CD4-positive, alpha-beta T cell (primary cell): ENCODE measurements at regions of chr1 and their contacts with region 1.

Region 1: GRCh38 chr1:15847100-15847892 is at the start of gene SPEN:
- DNase-seq: peak; percentile 91 to 99 (median 98)
- ATAC-seq: peak; percentile 83
- H3K4me3 ChIP-seq: peak within 1 kb of the TSS; percentile 98
- H3K4me3 Mint-ChIP-seq: peak within 1 kb of the TSS; percentile 97
- H3K27ac ChIP-seq: peak within 1 kb of the TSS; percentile 90 to 92
- H3K27ac Mint-ChIP-seq: peak within 1 kb of the TSS; percentile 96
- H3K4me1 ChIP-seq: peaks cover 42% of the 10 kb centered on the region
- H3K4me1 Mint-ChIP-seq: peaks cover 55% of the 10 kb centered on the region
- H3K27me3 ChIP-seq: no peaks in the 10 kb centered on the region
- H3K27me3 Mint-ChIP-seq: no peaks in the 10 kb centered on the region
- CTCF ChIP-seq: no peak
- total RNA-seq, gene SPEN: 73.5 to 76.7 TPM

Region 2: DNA sequence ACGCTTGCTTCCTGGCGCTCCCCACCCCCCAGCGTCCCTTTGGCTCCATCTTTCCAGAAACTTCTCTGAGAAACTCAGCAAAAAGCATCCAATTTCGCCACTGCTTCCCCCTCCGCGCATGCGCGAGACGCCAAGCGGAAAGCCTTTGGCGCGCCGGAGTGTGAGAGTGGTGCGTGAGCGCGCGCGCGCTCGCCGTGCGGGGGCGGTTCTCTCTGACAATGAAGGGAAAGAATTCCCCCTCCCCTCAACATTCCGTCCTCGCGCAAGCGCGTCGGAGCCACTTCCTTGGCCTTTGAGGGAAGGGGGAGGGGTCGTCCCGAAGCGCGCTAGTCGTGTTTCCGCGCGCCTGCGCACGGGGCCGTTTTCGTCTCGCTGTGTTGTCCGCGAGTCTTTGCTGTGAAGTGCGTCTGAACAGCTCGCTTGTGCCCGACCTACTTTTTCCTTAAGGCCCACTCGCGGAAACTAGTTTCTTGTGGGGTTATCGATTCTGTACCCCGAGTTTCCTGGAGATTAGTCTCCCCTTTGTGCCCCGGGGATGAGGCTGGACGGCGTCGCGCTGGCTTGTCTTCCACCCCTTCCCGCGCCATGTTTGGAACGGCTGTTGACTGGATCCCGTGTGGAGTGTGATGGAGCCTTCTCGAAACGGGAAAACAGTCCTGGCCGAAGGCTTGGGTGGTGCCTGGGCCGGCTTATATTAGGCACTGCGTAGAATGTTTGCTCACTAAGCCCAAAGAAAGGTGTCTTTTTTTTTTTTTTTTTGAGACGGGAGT is 11.4 kb before region 1 on chr1:
- CTCF ChIA-PET with region 1: interaction called, 26 read pairs
- POLR2A ChIA-PET with region 1: interaction called, 518 read pairs
- intact Hi-C with region 1: loop called (anchors 1 kb)
- DNase-seq: peak; percentile 97 to 100 (median 99)
- ATAC-seq: peak; percentile 54
- H3K4me3 ChIP-seq: peak overlapping the region; percentile 70
- H3K4me3 Mint-ChIP-seq: peak overlapping the region; percentile 98
- H3K27ac ChIP-seq: peak overlapping the region; percentile 96 to 99
- H3K27ac Mint-ChIP-seq: peak overlapping the region; percentile 99
- H3K4me1 ChIP-seq: peaks cover 35% of the 10 kb centered on the region
- H3K4me1 Mint-ChIP-seq: peaks cover 26% of the 10 kb centered on the region
- H3K27me3 ChIP-seq: no peaks in the 10 kb centered on the region
- H3K27me3 Mint-ChIP-seq: no peaks in the 10 kb centered on the region
- CTCF ChIP-seq: no peak

Region 3: GRCh38 chr1:15885701-15886610 is 38.7 kb after region 1 on chr1:
- CTCF ChIA-PET with region 1: no interaction called
- POLR2A ChIA-PET with region 1: interaction called, 15 read pairs
- intact Hi-C with region 1: loop called in 1 of 2 experiments (anchors 5 kb)
- DNase-seq: peak in 11 of 14 experiments; percentile 2 to 70 (median 33)
- ATAC-seq: peak; percentile 60
- H3K4me3 ChIP-seq: peak overlapping the region; percentile 26
- H3K4me3 Mint-ChIP-seq: peak overlapping the region; percentile 52
- H3K27ac ChIP-seq: no peak overlapping the region
- H3K27ac Mint-ChIP-seq: peak overlapping the region; percentile 68
- H3K4me1 ChIP-seq: peaks cover 33% of the 10 kb centered on the region
- H3K4me1 Mint-ChIP-seq: peaks cover 69% of the 10 kb centered on the region
- H3K27me3 ChIP-seq: no peaks in the 10 kb centered on the region
- H3K27me3 Mint-ChIP-seq: no peaks in the 10 kb centered on the region
- CTCF ChIP-seq: no peak

Region 4: GRCh38 chr1:15918962-15919715 is 71.8 kb after region 1 on chr1:
- CTCF ChIA-PET with region 1: interaction called, 3 read pairs
- POLR2A ChIA-PET with region 1: interaction called, 6 read pairs
- intact Hi-C with region 1: loop called in 1 of 2 experiments (anchors 5 kb)
- DNase-seq: peak in 9 of 14 experiments; percentile 14 to 71 (median 27)
- ATAC-seq: peak; percentile 84
- H3K4me3 ChIP-seq: no peak overlapping the region
- H3K4me3 Mint-ChIP-seq: no peak overlapping the region
- H3K27ac ChIP-seq: no peak overlapping the region
- H3K27ac Mint-ChIP-seq: peak overlapping the region; percentile 18
- H3K4me1 ChIP-seq: peaks cover 17% of the 10 kb centered on the region
- H3K4me1 Mint-ChIP-seq: peaks cover 30% of the 10 kb centered on the region
- H3K27me3 ChIP-seq: no peaks in the 10 kb centered on the region
- H3K27me3 Mint-ChIP-seq: no peaks in the 10 kb centered on the region
- CTCF ChIP-seq: no peak

Region 5: GRCh38 chr1:15985611-15986297 is 138.5 kb after region 1 on chr1:
- CTCF ChIA-PET with region 1: no interaction called
- POLR2A ChIA-PET with region 1: no interaction called
- intact Hi-C with region 1: no loop called
- DNase-seq: peak in 1 of 14 experiments; percentile 26
- ATAC-seq: no peak
- H3K4me3 ChIP-seq: no peak overlapping the region
- H3K4me3 Mint-ChIP-seq: no peak overlapping the region
- H3K27ac ChIP-seq: no peak overlapping the region
- H3K27ac Mint-ChIP-seq: no peak overlapping the region
- H3K4me1 ChIP-seq: no peaks in the 10 kb centered on the region
- H3K4me1 Mint-ChIP-seq: no peaks in the 10 kb centered on the region
- H3K27me3 ChIP-seq: peaks cover 0 to 8% of the 10 kb centered on the region in 2 experiments
- H3K27me3 Mint-ChIP-seq: peaks cover 10% of the 10 kb centered on the region
- CTCF ChIP-seq: no peak

Region 6: GRCh38 chr1:16351994-16352841 is 504.9 kb after region 1 on chr1 and contains the start of gene FBXO42:
- CTCF ChIA-PET with region 1: no interaction called
- POLR2A ChIA-PET with region 1: interaction called, 3 read pairs
- intact Hi-C with region 1: loop called in 1 of 2 experiments (anchors 5 kb)
- DNase-seq: peak; percentile 82 to 98 (median 91)
- ATAC-seq: peak; percentile 90
- H3K4me3 ChIP-seq: peak within 1 kb of the TSS; percentile 97
- H3K4me3 Mint-ChIP-seq: peak within 1 kb of the TSS; percentile 97
- H3K27ac ChIP-seq: peak within 1 kb of the TSS; percentile 83 to 89
- H3K27ac Mint-ChIP-seq: peak within 1 kb of the TSS; percentile 93
- H3K4me1 ChIP-seq: peaks cover 30% of the 10 kb centered on the region
- H3K4me1 Mint-ChIP-seq: peaks cover 34% of the 10 kb centered on the region
- H3K27me3 ChIP-seq: no peaks in the 10 kb centered on the region
- H3K27me3 Mint-ChIP-seq: no peaks in the 10 kb centered on the region
- CTCF ChIP-seq: peak; percentile 52
- total RNA-seq, gene FBXO42: 14.3 to 14.9 TPM